ENCODE measurements at regions of chr15 and their contacts with region 1.

Region 1: GRCh38 chr15:52256366-52256765 is 39.2 kb downstream of the MYO5C start:
- DNase-seq: peak in 5 of 6 donors; percentile 48 to 75 (median 53)
- ATAC-seq: peak; percentile 58 to 83 (median 73)
- H3K4me3 ChIP-seq: no peak overlapping the region
- H3K27ac ChIP-seq: no peak overlapping the region
- H3K4me1 ChIP-seq: peaks cover 0 to 10% (median 0%) of the 10 kb centered on the region in 3 donors
- H3K27me3 ChIP-seq: no peaks in the 10 kb centered on the region
- CTCF ChIP-seq: peak; percentile 57 to 77 (median 67)

Region 2: DNA sequence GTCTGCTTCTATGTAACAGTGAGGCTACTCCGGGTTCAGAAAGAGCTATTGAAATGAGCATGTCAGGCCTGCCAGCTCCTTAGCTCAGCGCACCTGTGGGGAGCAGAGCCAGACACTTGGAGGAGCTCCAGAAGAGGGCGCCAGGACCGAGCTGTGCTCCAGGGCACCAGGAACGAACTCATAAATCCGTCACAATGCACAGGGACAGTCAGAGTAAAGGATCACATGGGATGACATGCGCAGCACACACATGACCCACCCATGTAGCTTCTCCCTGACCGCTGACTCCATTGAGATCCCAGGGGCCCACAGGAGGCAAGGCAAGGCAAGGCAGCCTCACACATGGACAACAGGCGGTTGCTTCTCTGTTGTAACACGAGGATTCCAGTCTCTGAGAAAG is 39.2 kb before region 1 on chr15:
- intact Hi-C with region 1: no loop called
- DNase-seq: peak in 3 of 6 donors; percentile 26 to 63 (median 44)
- ATAC-seq: peak; percentile 56 to 81 (median 74)
- H3K4me3 ChIP-seq: no peak overlapping the region
- H3K27ac ChIP-seq: no peak overlapping the region
- H3K4me1 ChIP-seq: no peaks in the 10 kb centered on the region
- H3K27me3 ChIP-seq: no peaks in the 10 kb centered on the region
- CTCF ChIP-seq: no peak

Region 3: DNA sequence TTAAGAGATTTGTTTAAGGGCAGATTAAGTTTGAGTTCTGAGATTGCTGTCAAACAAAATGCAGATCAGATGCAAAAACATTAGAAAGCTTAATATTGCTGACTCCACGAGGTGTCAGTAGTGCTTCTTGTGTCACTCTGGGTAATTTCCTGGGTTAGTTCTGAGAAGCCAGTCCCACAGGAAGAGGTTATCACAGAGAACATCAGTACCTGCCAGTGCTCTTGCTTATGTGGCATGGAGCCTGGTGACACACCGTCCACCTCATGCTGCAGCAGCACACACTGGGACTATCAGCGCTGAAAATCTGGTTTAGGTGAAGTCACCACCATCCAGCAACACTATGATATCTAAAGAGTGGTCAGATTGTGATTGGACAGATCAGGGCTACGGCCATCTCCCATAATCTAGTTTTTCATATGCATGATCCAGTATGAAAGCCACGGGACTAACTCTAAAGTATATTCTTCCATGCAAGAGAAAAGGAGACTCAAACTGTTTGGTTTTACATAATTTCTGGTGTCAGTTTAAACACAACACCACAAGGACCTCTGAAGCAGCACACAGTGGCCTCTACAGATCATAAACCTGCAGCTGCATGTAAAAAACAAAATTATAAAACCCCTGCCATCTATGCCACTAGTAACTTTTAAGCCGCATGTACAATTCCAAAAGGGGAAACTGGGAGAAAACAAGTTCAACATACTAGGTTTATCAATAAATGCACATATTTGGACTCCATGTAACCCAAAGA is 75.3 kb after region 1 on chr15:
- intact Hi-C with region 1: loop called in 2 of 3 experiments (anchors 10 kb)
- DNase-seq: peak in 2 of 6 donors; percentile 17 to 39
- ATAC-seq: peak; percentile 75 to 85 (median 81)
- H3K4me3 ChIP-seq: no peak overlapping the region
- H3K27ac ChIP-seq: no peak overlapping the region
- H3K4me1 ChIP-seq: peaks cover 3 to 12% (median 9%) of the 10 kb centered on the region in 3 donors
- H3K27me3 ChIP-seq: no peaks in the 10 kb centered on the region
- CTCF ChIP-seq: no peak

Region 4: DNA sequence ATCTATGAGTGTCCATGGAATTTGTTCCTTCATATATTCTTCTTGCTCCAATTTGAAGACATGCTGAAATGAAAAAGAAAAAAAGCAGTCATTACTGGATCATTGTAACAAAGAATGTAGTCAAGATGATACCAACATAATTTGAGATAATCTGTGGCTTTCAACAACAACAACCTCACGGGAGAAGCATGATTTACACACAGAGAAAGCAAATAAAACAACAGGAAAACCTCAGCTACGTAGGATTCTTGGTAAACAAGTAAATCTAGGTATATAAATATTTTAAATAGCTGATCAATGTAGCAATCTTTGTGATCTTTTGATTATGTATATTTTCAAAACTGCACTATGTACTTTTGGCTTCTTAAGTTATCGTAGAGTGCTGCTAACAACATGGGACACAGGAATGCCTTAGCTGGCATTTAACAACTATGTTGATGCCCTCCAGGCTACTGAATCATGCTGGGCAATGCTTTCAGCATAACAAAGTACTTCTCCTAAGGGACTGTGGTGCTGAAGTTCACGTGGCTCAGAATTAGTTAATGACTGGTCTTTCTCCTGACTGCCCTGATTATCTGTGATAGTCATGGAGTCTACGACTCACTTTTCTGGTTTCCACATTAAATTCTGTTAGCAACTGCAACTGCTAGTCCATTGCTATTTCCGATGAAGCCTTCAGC is 135.8 kb after region 1 on chr15:
- intact Hi-C with region 1: no loop called
- DNase-seq: no peak
- ATAC-seq: no peak
- H3K4me3 ChIP-seq: no peak overlapping the region
- H3K27ac ChIP-seq: no peak overlapping the region
- H3K4me1 ChIP-seq: no peaks in the 10 kb centered on the region
- H3K27me3 ChIP-seq: no peaks in the 10 kb centered on the region
- CTCF ChIP-seq: no peak

Region 5: GRCh38 chr15:52735231-52736089 is 479.1 kb after region 1 on chr15:
- intact Hi-C with region 1: loop called in 2 of 3 experiments (anchors 10 kb)
- DNase-seq: peak in 3 of 6 donors; percentile 58 to 76 (median 60)
- ATAC-seq: peak; percentile 85 to 92 (median 90)
- H3K4me3 ChIP-seq: no peak overlapping the region
- H3K27ac ChIP-seq: no peak overlapping the region
- H3K4me1 ChIP-seq: peaks cover 0 to 15% (median 3%) of the 10 kb centered on the region in 3 donors
- H3K27me3 ChIP-seq: no peaks in the 10 kb centered on the region
- CTCF ChIP-seq: peak; percentile 69 to 82 (median 76)